Lower leg skin (tissue), 4 donors: ENCODE measurements at regions of chr6 and their contacts with region 1.

Region 1: GRCh38 chr6:79869600-79870084 is 77.7 kb downstream of the ELOVL4 start:
- DNase-seq: peak; percentile 52 to 93
- H3K4me3 ChIP-seq: no peak overlapping the region
- CTCF ChIP-seq: peak in 1 of 3 donors; percentile 59
- POLR2A ChIP-seq: no peak

Region 2: DNA sequence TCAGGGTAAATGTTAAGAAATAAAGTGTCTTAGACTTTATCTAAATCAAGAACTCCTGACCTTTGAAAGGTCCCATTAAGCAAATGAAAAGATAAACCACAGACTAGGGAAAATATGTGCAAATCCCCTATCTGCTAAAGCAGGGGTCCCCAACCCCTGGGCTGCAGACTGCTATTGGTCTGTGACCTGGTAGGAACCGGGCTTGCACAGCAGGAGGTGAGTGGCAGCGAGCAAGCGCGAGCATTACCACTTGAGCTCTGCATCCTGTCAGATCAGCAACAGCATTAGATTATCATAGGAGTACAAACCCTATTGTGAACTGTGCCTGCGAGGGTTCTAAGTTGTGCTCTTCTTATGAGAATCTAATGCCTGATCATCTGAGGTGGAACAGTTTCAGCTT is 374.8 kb before region 1 on chr6:
- intact Hi-C with region 1: no loop called
- DNase-seq: no peak
- H3K4me3 ChIP-seq: no peak overlapping the region
- CTCF ChIP-seq: no peak
- POLR2A ChIP-seq: no peak

Region 3: DNA sequence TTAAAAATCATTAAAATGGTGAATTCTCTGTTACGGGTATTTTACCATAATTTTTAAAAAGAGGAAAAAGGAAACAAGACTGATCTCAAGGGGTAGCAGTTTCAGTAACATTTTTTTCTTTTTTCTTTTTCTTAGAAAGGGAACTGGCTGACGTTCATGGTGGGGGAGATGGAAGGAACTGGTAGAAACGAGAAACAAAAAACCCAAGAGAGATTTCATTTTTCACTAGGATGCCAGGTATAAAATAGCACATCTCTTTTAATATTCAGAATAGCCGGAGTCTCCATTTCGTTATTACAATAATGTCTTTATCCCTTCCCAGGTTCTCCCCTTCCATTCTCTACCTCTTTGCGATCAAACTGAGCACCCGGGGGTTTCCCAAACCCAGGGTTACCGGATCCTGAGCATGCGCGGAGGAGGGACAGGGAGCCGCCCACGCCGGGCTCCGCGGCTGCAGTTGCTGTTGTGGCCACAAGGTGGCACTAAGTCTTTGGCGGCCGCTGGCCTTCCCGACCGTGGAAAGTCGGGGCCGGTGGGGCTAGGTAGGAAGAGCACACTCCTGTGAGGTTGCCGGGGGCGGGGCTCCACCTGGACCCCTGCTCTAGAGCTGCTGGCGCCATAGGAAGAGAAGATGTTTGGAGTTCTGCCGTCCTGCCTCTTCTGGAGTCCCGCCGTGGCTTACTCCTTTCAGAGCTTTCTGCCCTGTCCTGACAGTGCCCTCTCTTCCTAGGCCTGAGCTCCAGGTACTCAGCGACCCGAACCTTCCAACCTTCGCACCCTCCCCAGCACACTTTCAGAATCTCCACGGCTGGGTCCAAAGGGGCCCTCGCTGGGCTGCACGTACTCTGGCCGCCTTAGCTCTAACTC is 91.7 kb before region 1 on chr6:
- intact Hi-C with region 1: loop called (anchors 2 kb)
- DNase-seq: peak; percentile 64 to 93
- H3K4me3 ChIP-seq: no peak overlapping the region
- CTCF ChIP-seq: peak in 1 of 3 donors; percentile 73
- POLR2A ChIP-seq: no peak